ENCODE measurements at regions of chr4 and their contacts with region 1.

Region 1: GRCh38 chr4:159016593-159017024 is 86.3 kb upstream of the RAPGEF2 start:
- DNase-seq: peak; percentile 56
- ATAC-seq: peak; percentile 74
- H3K4me3 ChIP-seq: no peak overlapping the region
- H3K27ac ChIP-seq: no peak overlapping the region
- H3K4me1 ChIP-seq: peaks cover 24% of the 10 kb centered on the region
- H3K27me3 ChIP-seq: no peaks in the 10 kb centered on the region
- CTCF ChIP-seq: peak; percentile 46 to 59 (median 49); a peak in 5 of 6 replicates
- EP300 ChIP-seq: 0 out of 4 replicates have a peak, but pooled peaks of 1 of the 2 experiments have one; percentile 19
- POLR2A ChIP-seq: no peak
- RAD21 ChIP-seq: peak; percentile 35; the same call in 1 of the 2 replicates

Region 2: GRCh38 chr4:158809611-158810486 is 206.8 kb before region 1 on chr4:
- CTCF ChIA-PET with region 1: no interaction called
- POLR2A ChIA-PET with region 1: no interaction called
- RAD21 ChIA-PET with region 1: interaction called, 14 read pairs
- SMC1A ChIA-PET with region 1: interaction called, 3 read pairs
- in situ Hi-C with region 1: no loop called
- intact Hi-C with region 1: no loop called
- DNase-seq: peak; percentile 89
- ATAC-seq: peak; percentile 91
- H3K4me3 ChIP-seq: no peak overlapping the region; the same call in 1 of the 2 replicates
- H3K27ac ChIP-seq: peak overlapping the region; percentile 43
- H3K4me1 ChIP-seq: peaks cover 30% of the 10 kb centered on the region
- H3K27me3 ChIP-seq: no peaks in the 10 kb centered on the region; a peak in 1 of 4 replicates
- CTCF ChIP-seq: no peak
- EP300 ChIP-seq: peak; percentile 84 to 89
- POLR2A ChIP-seq: no peak
- RAD21 ChIP-seq: no peak

Region 3: DNA sequence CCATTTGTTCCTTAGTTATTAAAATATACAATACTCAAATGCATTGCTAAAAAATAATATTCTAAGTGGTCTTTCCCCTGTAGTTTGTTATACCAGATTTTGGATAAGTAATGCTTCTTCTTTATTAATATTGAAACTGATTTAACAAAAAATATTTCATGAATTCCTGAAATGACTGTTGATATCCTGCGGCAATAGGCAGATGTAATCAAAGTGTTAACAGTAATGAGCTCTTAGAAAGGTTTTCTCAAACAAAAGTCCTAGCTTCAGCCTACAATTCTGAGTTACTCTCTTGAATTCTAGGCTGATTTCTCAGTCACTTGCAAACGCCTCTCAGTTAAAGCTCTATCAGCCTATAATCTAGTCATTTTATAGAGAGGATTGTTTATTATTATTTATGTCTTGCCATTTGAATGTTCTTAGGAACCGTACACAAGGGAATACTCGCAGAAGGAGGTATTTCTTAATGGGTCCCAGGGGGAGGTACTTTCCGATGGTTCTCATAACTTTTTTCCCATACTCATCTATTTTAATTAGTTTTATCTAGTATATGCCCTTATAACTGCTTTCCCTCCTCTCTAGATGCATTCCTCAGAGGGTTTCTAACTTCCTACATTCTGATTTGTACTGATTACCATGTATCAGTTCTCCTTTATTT is 151.0 kb before region 1 on chr4:
- CTCF ChIA-PET with region 1: interaction called, 31 read pairs
- POLR2A ChIA-PET with region 1: interaction called, 7 read pairs
- RAD21 ChIA-PET with region 1: interaction called, 33 read pairs
- SMC1A ChIA-PET with region 1: interaction called, 43 read pairs
- in situ Hi-C with region 1: no loop called
- intact Hi-C with region 1: no loop called
- DNase-seq: peak; percentile 59
- ATAC-seq: peak; percentile 41
- H3K4me3 ChIP-seq: no peak overlapping the region
- H3K27ac ChIP-seq: peak overlapping the region; percentile 19; the same call in 1 of the 2 replicates
- H3K4me1 ChIP-seq: peaks cover 12% of the 10 kb centered on the region
- H3K27me3 ChIP-seq: no peaks in the 10 kb centered on the region
- CTCF ChIP-seq: no peak
- EP300 ChIP-seq: no peak
- POLR2A ChIP-seq: no peak
- RAD21 ChIP-seq: no peak

Region 4: DNA sequence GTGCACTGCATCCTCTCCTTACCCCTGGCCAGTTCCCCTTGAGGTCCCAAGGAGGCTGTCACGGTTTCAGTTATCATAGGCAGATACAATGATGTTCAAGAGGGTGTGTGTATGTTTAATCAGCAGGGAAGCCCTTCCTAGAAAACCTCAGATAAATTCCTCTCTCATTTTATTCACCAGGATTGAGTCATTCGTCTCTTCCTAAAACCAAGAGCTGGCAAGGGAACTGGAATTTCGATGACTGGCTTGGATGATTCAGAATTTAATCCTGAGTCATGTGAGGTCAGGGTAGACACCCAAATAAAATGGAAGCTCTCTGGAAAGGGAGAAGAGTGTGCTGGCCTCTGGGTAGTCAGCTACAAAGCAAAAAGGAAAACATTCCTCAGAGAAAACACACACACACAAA is 19.9 kb before region 1 on chr4:
- CTCF ChIA-PET with region 1: interaction called, 10 read pairs
- POLR2A ChIA-PET with region 1: no interaction called
- RAD21 ChIA-PET with region 1: interaction called, 6 read pairs
- SMC1A ChIA-PET with region 1: interaction called, 4 read pairs
- in situ Hi-C with region 1: no loop called
- intact Hi-C with region 1: no loop called
- DNase-seq: no peak
- ATAC-seq: no peak
- H3K4me3 ChIP-seq: no peak overlapping the region
- H3K27ac ChIP-seq: no peak overlapping the region
- H3K4me1 ChIP-seq: no peaks in the 10 kb centered on the region
- H3K27me3 ChIP-seq: no peaks in the 10 kb centered on the region
- CTCF ChIP-seq: no peak
- EP300 ChIP-seq: no peak
- POLR2A ChIP-seq: no peak
- RAD21 ChIP-seq: no peak

Region 5: GRCh38 chr4:159035570-159035969 is 19.0 kb after region 1 on chr4:
- CTCF ChIA-PET with region 1: interaction called, 11 read pairs
- POLR2A ChIA-PET with region 1: no interaction called
- RAD21 ChIA-PET with region 1: interaction called, 5 read pairs
- SMC1A ChIA-PET with region 1: interaction called, 4 read pairs
- in situ Hi-C with region 1: no loop called
- intact Hi-C with region 1: no loop called
- DNase-seq: no peak
- ATAC-seq: peak; percentile 21; the same call in 1 of the 3 replicates
- H3K4me3 ChIP-seq: no peak overlapping the region
- H3K27ac ChIP-seq: no peak overlapping the region
- H3K4me1 ChIP-seq: no peaks in the 10 kb centered on the region; the same call in 1 of the 2 replicates
- H3K27me3 ChIP-seq: peaks cover 0 to 2% of the 10 kb centered on the region in 2 experiments; a peak in 2 of 4 replicates
- CTCF ChIP-seq: no peak
- EP300 ChIP-seq: no peak
- POLR2A ChIP-seq: no peak
- RAD21 ChIP-seq: no peak

Region 6: DNA sequence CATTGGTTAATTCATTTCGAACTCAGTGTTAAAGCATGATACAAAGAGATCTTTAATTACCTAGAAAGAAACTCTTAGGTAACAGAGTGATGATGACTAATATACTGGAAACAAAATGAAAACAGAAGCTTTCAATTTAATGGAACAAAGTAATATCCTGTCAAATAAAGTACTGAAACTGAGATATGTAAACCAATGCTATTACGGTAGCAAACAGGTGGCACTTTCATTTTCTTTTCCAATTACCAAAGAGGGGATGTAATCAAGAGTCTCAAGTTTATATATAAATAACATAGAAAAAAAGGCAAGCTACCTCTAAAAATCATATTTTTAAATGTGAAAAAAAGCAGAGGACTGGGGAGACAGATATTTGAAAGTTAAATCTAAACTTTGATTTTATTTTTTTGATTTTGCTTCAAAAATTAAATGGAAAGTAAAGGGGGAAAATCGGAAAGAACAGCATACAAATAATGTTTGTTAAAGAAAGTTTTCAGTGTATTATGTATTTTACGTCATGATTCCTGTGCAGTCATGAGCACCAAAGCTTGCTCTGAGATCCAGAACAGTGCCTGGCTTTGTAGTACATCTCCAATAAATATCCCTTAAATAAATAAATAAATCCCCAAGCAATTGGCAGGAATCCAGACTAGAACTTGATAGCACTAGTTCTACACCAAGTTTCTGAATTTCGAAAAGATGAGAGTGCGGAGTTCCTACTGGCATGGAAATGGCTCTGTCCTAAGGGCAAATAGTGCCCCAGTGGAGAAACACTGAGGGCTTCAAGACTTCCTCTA is 61.3 kb after region 1 on chr4:
- CTCF ChIA-PET with region 1: interaction called, 3 read pairs
- POLR2A ChIA-PET with region 1: interaction called, 5 read pairs
- RAD21 ChIA-PET with region 1: interaction called, 7 read pairs
- SMC1A ChIA-PET with region 1: interaction called, 18 read pairs
- in situ Hi-C with region 1: no loop called
- intact Hi-C with region 1: loop called (anchors 1 kb)
- DNase-seq: peak; percentile 77
- ATAC-seq: peak; percentile 92
- H3K4me3 ChIP-seq: 0 out of 2 replicates have a peak overlapping the region, but pooled peaks have one; percentile 1
- H3K27ac ChIP-seq: peak overlapping the region; percentile 83
- H3K4me1 ChIP-seq: peaks cover 23% of the 10 kb centered on the region
- H3K27me3 ChIP-seq: no peaks in the 10 kb centered on the region
- CTCF ChIP-seq: no peak
- EP300 ChIP-seq: peak; percentile 92 to 95; a peak in 3 of 4 replicates
- POLR2A ChIP-seq: no peak
- RAD21 ChIP-seq: no peak

Region 7: DNA sequence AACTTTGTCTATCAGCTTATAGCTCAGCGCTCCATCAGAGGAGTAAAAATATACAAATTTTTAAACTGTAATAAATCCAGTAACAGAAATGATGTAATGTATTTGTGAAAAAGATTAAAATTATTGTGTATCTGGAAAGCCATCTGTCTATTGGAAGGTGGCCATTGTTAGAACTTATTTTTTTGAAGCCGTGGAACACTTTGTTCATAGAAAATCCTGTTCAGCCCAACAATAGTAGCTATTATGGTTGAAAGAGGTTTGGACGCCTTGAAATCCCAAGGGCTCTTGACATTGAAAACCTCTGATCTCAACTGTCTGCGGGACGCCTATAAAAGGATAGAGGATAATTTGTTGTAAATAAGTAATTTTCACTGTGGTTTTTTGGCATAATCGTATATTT is 184.6 kb after region 1 on chr4:
- CTCF ChIA-PET with region 1: interaction called, 15 read pairs
- POLR2A ChIA-PET with region 1: no interaction called
- RAD21 ChIA-PET with region 1: interaction called, 7 read pairs
- SMC1A ChIA-PET with region 1: interaction called, 29 read pairs
- in situ Hi-C with region 1: no loop called
- intact Hi-C with region 1: no loop called
- DNase-seq: no peak
- ATAC-seq: no peak
- H3K4me3 ChIP-seq: no peak overlapping the region
- H3K27ac ChIP-seq: no peak overlapping the region
- H3K4me1 ChIP-seq: peaks cover 18% of the 10 kb centered on the region
- H3K27me3 ChIP-seq: no peaks in the 10 kb centered on the region
- CTCF ChIP-seq: no peak
- EP300 ChIP-seq: no peak
- POLR2A ChIP-seq: no peak
- RAD21 ChIP-seq: no peak